OCI-LY7 (cell line): ENCODE measurements at regions of chr12 and their contacts with region 1.

Region 1: DNA sequence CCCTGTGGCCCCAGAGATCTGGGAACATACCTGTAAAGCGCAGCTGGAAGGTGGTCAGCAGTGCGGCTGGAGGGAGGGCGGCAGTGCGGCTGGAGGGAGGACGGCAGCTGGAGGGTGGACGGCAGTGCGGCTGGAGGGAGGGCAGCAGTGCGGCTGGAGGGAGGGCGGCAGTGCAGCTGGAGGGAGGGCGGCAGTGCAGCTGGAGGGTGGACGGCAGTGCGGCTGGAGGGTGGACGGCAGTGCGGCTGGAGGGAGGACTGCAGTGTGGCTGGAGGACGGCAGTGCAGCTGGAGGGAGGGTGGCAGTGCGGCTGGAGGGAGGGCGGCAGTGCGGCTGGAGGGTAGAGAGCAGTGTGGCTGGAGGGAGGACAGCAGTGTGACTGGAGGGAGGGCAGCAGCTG is 23.5 kb downstream of the LRCOL1 start:
- DNase-seq: no peak
- H3K4me3 ChIP-seq: no peak overlapping the region
- H3K27ac ChIP-seq: no peak overlapping the region
- H3K4me1 ChIP-seq: no peaks in the 10 kb centered on the region
- CTCF ChIP-seq: no peak

Region 2: GRCh38 chr12:132544498-132544897 is 42.4 kb before region 1 on chr12:
- CTCF ChIA-PET with region 1: no interaction called
- POLR2A ChIA-PET with region 1: interaction called, 14 read pairs
- intact Hi-C with region 1: no loop called
- DNase-seq: no peak
- H3K4me3 ChIP-seq: no peak overlapping the region
- H3K27ac ChIP-seq: no peak overlapping the region
- H3K4me1 ChIP-seq: peaks cover 3% of the 10 kb centered on the region
- CTCF ChIP-seq: no peak

Region 3: DNA sequence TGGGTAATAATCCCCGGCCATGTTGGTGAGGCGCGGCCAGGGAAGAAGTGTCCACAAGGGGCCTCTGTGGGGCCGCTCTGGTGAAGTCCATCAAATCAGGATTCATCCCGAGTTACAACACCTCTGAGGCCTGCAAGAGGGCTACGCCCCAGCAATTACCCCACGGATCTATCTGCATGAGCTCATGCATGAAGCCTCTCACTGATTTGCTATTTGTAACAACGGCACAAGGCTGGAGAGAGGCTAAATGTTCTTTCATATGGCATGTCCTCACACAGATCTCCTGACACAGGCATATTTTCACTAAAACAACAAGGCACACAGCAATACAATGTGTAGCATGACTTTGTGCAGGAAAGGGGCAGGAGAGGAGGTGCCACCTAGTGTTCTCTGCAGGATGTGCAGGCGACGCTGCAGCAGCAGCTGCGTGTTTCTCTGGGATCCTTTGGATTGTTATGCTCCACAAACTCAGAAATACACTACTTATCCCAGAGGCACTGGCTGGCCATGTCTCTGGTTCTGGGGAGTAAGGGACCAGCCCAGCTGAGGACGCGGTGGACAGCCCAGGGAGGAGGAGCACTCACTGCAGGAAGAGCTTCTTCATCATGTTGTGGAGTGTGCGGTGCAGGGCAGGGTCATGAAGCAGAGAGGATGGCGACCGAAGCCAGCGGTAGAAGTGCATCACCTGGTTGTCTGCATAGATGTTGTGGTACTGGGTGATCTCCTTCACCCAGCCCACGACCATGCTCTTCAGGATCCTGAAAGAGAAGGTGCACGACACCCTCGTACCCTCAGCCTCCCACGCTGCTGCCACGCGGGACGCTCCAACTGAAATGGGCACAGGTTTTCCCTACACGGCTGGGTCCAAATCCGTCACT is 51.9 kb after region 1 on chr12:
- CTCF ChIA-PET with region 1: no interaction called
- POLR2A ChIA-PET with region 1: no interaction called
- intact Hi-C with region 1: no loop called
- DNase-seq: peak; percentile 41
- H3K4me3 ChIP-seq: no peak overlapping the region
- H3K27ac ChIP-seq: no peak overlapping the region
- H3K4me1 ChIP-seq: peaks cover 32% of the 10 kb centered on the region
- CTCF ChIP-seq: peak; percentile 88